Dorsolateral prefrontal cortex (tissue), 120 donors: ENCODE measurements at regions of chr19 and their contacts with region 1.

Region 1: GRCh38 chr19:58154679-58155648 is 4.4 kb upstream of the ZNF329 start:
- DNase-seq: peak; percentile 80 to 96 (median 93)
- H3K4me3 ChIP-seq: peak overlapping the region; percentile 61 to 99 (median 92)
- H3K27ac ChIP-seq: peak overlapping the region in 58 of 59 donors; percentile 9 to 97 (median 88)
- H3K27me3 ChIP-seq: no peaks in the 10 kb centered on the region
- CTCF ChIP-seq: peak; percentile 96 to 100 (median 99)

Region 2: GRCh38 chr19:57103573-57104277 is 1051.2 kb before region 1 on chr19:
- intact Hi-C with region 1: loop called (anchors 10 kb)
- DNase-seq: peak; percentile 59 to 88 (median 74)
- H3K4me3 ChIP-seq: peak overlapping the region in 58 of 59 donors; percentile 4 to 61 (median 45)
- H3K27ac ChIP-seq: peak overlapping the region in 1 of 59 donors; percentile 22
- H3K27me3 ChIP-seq: peaks cover 0 to 32% (median 18%) of the 10 kb centered on the region in 45 donors
- CTCF ChIP-seq: peak; percentile 68 to 96 (median 90)

Region 3: GRCh38 chr19:57746580-57747471 is 408.1 kb before region 1 on chr19 and contains the start of gene ZNF776:
- intact Hi-C with region 1: loop called (anchors 10 kb)
- DNase-seq: peak; percentile 62 to 94 (median 84)
- H3K4me3 ChIP-seq: peak within 1 kb of the TSS; percentile 65 to 100 (median 95)
- H3K27ac ChIP-seq: peak within 1 kb of the TSS in 57 of 59 donors; percentile 3 to 92 (median 82)
- H3K27me3 ChIP-seq: no peaks in the 10 kb centered on the region
- CTCF ChIP-seq: peak in 31 of 56 donors; percentile 11 to 49 (median 32)
- total RNA-seq, gene ZNF776: 16.1 to 36.3 (median 24.7) TPM

Region 4: GRCh38 chr19:58002384-58003173 is 152.4 kb before region 1 on chr19 and contains the start of gene ZNF606:
- intact Hi-C with region 1: loop called (anchors 5 kb)
- DNase-seq: peak; percentile 66 to 91 (median 83)
- H3K4me3 ChIP-seq: peak within 1 kb of the TSS; percentile 64 to 100 (median 92)
- H3K27ac ChIP-seq: peak within 1 kb of the TSS; percentile 36 to 97 (median 92)
- H3K27me3 ChIP-seq: no peaks in the 10 kb centered on the region
- CTCF ChIP-seq: peak in 28 of 56 donors; percentile 6 to 53 (median 34)
- total RNA-seq, gene ZNF606: 14.4 to 48.2 (median 23.9) TPM

Region 5: DNA sequence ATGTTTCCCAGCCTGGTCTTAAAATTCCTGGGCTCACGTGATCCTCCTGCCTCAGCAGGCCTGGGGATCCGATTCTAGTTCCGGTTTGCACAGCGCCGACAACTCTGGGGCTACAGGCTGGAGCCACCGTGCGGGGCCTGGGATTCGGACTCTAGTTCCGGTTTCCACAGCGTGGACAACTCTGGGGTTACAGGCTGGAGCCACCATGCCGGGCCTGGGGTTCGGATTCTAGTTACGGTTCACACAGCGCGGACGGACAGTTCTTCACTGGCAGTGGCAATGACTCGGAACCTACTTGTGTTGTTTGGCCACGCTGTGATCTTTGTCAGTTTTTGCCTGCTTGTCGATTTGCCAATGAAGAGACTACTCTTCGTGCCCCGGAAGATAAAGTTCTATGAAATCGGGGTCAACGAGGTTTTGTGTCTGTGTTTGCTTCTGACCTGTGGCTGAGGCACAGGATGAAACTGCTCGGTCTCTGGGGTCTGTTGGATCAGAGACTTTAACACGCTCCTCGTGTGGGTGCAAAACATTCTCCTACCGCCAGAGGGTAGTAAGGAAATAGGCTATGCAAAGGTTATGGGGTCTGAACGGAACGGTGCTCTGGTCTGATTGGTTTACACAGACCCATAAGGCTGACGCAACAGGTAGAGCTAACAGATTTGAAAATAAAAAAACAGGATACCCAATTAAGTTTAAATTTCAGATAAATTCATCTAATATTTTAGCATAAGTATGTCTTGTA is 133.3 kb before region 1 on chr19:
- intact Hi-C with region 1: loop called (anchors 1 to 5 kb)
- DNase-seq: peak in 4 of 10 donors; percentile 58 to 69 (median 66)
- H3K4me3 ChIP-seq: peak overlapping the region in 3 of 59 donors; percentile 6 to 32 (median 14)
- H3K27ac ChIP-seq: no peak overlapping the region
- H3K27me3 ChIP-seq: no peaks in the 10 kb centered on the region
- CTCF ChIP-seq: peak; percentile 54 to 91 (median 80)

Region 6: GRCh38 chr19:58059003-58059670 is 95.8 kb before region 1 on chr19 and contains the start of gene ZNF135:
- intact Hi-C with region 1: loop called in 1 of 2 experiments (anchors 2 kb)
- DNase-seq: peak; percentile 74 to 90 (median 83)
- H3K4me3 ChIP-seq: peak within 1 kb of the TSS; percentile 60 to 98 (median 80)
- H3K27ac ChIP-seq: peak within 1 kb of the TSS; percentile 70 to 99 (median 95)
- H3K27me3 ChIP-seq: no peaks in the 10 kb centered on the region
- CTCF ChIP-seq: peak in 15 of 56 donors; percentile 11 to 45 (median 27)
- total RNA-seq, gene ZNF135: 9.8 to 28.1 (median 16.8) TPM

Region 7: DNA sequence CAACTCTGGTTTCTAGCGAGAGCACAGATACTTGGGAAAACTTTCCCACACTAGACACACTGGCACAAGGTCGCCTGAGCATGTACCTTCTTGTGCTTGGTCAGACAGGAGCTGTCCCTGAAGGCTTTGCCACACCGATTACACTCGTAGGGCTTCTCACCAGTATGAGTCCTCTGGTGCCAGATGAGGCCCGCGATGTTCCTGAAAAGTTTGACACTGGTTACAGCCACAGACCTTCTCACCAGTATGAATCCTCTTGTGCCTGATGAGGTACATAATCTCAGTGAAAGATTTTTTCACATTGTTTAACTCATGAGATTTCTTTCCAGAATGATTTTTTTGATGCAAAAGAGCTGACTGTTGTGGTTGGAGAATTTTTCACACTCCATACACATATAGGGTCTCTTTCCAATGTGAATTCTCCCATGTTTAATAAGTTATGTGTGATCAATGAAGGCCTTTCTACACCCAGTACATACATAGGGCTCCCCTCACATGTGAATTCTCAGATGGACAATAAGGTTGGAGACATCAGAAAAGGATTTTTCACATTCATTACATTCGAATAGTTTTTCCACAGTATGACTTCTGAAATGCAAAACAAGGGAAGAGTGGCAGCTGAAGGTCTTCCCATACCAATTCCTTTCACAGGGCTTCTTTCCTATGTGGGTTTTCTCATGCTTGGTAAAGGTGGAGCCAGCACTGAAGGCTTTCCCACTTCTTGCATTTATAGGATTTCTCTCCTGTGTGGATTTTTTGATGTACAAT is 47.0 kb before region 1 on chr19:
- intact Hi-C with region 1: no loop called
- DNase-seq: no peak
- H3K4me3 ChIP-seq: no peak overlapping the region
- H3K27ac ChIP-seq: no peak overlapping the region
- H3K27me3 ChIP-seq: no peaks in the 10 kb centered on the region
- CTCF ChIP-seq: no peak

Region 8: DNA sequence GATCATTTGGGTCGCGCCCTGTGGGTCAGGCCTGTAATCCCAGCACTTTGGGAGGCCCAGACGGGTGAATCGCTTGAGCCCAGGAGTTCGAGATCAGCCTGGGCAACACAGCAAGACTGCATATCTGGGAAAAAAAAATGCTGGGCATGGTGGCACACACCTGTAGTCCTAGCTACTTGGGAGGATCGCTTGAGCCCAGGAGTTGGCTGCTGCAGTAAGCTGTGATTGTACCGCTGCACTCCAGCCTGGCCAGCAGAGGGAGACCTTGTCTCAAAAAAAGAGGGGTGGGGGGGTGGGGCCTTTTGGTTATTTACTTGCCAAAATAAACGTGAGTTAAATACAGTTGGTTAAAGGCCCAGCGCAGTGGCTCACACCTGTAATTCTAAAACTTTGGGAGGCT is 63.9 kb after region 1 on chr19:
- intact Hi-C with region 1: no loop called
- DNase-seq: no peak
- H3K4me3 ChIP-seq: no peak overlapping the region
- H3K27ac ChIP-seq: no peak overlapping the region
- H3K27me3 ChIP-seq: no peaks in the 10 kb centered on the region
- CTCF ChIP-seq: peak in 1 of 56 donors; percentile 9

Region 9: DNA sequence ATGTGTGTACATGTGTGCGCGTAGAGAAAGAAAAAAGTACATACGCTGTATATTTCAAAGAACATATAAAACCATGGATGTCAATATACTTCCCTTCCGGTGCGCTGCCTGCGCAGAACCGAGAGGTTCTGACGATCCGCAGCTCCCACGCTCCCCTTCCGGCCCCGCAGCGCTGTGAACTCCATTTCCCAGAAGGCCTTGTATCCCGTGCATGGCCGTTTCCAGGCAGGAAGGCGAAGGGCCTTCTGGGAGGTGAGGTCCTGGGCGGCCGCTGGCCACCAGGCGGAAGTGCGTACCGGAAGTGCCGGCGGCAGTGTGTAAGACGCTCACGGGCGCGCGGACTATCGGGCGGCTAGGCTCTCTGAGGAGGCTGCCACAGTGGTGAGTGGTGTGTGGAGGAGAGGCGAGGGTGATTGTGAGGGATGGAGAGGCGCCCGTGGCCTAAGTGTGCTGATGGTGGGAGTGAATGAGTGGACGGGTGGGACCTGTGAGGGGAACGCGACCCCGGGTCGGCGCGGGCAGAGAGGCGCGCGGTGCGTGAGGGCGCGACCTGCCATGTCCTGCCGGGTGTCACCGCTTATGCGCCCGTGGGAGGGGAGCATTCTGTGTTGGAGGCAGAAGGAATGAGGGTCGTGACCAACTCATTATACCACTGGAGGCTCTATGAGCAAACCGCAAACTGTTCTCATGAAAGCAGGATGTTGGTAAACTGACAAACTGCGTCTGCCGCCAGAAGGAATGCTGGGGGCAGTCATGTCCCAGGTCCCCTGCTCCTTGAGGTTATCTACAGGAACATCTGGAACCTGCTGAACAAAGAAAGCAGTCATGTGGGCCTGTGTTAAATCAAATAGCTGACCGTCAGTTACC is 150.3 kb after region 1 on chr19 and contains the start of gene ERVK3-1:
- intact Hi-C with region 1: loop called in 1 of 2 experiments (anchors 10 kb)
- DNase-seq: peak; percentile 95 to 98 (median 98)
- H3K4me3 ChIP-seq: peak within 1 kb of the TSS; percentile 73 to 99 (median 91)
- H3K27ac ChIP-seq: peak within 1 kb of the TSS in 58 of 59 donors; percentile 5 to 96 (median 82)
- H3K27me3 ChIP-seq: no peaks in the 10 kb centered on the region
- CTCF ChIP-seq: peak in 49 of 56 donors; percentile 5 to 67 (median 42)
- total RNA-seq, gene ERVK3-1: 26.9 to 56.2 (median 37.1) TPM